K562 (cell line): ENCODE measurements at regions of chr4 and their contacts with region 1.

Region 1: GRCh38 chr4:26410385-26411293 is 79.6 kb downstream of the CCKAR start:
- DNase-seq: peak; percentile 14 to 67 (median 18)
- ATAC-seq: peak; percentile 84
- H3K4me3 ChIP-seq: no peak overlapping the region
- H3K27ac ChIP-seq: no peak overlapping the region
- H3K4me1 ChIP-seq: no peaks in the 10 kb centered on the region
- H3K27me3 ChIP-seq: no peaks in the 10 kb centered on the region
- CTCF ChIP-seq: peak; percentile 46 to 77 (median 55); a peak in 4 of 6 replicates
- EP300 ChIP-seq: no peak
- POLR2A ChIP-seq: no peak
- RAD21 ChIP-seq: peak; percentile 78 to 88

Region 2: GRCh38 chr4:26061248-26061986 is 349.2 kb before region 1 on chr4:
- CTCF ChIA-PET with region 1: interaction called, 8 read pairs
- POLR2A ChIA-PET with region 1: no interaction called
- in situ Hi-C with region 1: loop called (anchors 25 kb)
- intact Hi-C with region 1: loop called (anchors 5 kb)
- DNase-seq: peak; percentile 47 to 57 (median 53)
- ATAC-seq: peak; percentile 97
- H3K4me3 ChIP-seq: no peak overlapping the region
- H3K27ac ChIP-seq: no peak overlapping the region
- H3K4me1 ChIP-seq: peaks cover 0 to 7% of the 10 kb centered on the region in 2 experiments; a peak in 1 of 5 replicates
- H3K27me3 ChIP-seq: peaks cover 0 to 12% of the 10 kb centered on the region in 2 experiments; a peak in 2 of 5 replicates
- CTCF ChIP-seq: peak; percentile 60 to 73 (median 68)
- EP300 ChIP-seq: no peak
- POLR2A ChIP-seq: no peak
- RAD21 ChIP-seq: peak; percentile 40 to 71

Region 3: GRCh38 chr4:26081795-26082498 is 328.7 kb before region 1 on chr4:
- CTCF ChIA-PET with region 1: interaction called, 6 read pairs
- POLR2A ChIA-PET with region 1: no interaction called
- in situ Hi-C with region 1: no loop called
- intact Hi-C with region 1: loop called (anchors 5 kb)
- DNase-seq: peak; percentile 50 to 59 (median 56)
- ATAC-seq: peak; percentile 92
- H3K4me3 ChIP-seq: no peak overlapping the region
- H3K27ac ChIP-seq: no peak overlapping the region
- H3K4me1 ChIP-seq: no peaks in the 10 kb centered on the region
- H3K27me3 ChIP-seq: peaks cover 5 to 16% of the 10 kb centered on the region in 2 experiments; a peak in 4 of 5 replicates
- CTCF ChIP-seq: peak; percentile 46 to 78 (median 63)
- EP300 ChIP-seq: no peak
- POLR2A ChIP-seq: no peak
- RAD21 ChIP-seq: peak; percentile 59 to 80

Region 4: DNA sequence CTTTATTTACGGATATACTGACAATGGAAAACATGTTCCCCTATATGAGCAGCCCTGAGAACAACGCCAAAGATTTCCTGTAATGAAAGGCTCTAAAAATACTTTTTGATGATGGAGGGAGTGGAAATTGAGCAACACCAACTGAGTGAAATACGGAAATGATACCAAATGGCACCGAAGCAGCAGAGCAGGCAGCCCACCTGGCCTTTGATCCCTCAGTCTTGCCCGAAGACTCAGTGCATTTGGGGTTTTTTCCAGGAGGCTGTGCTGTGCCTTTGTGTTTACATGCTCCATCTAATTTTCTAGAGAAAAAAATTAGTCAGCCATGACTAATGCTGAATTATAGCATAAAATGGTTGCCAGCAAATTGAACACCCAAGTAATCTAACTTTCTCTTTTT is 259.7 kb before region 1 on chr4:
- CTCF ChIA-PET with region 1: no interaction called
- POLR2A ChIA-PET with region 1: no interaction called
- in situ Hi-C with region 1: no loop called
- intact Hi-C with region 1: loop called (anchors 10 kb)
- DNase-seq: no peak
- ATAC-seq: no peak
- H3K4me3 ChIP-seq: no peak overlapping the region
- H3K27ac ChIP-seq: no peak overlapping the region
- H3K4me1 ChIP-seq: no peaks in the 10 kb centered on the region
- H3K27me3 ChIP-seq: peaks cover 2 to 13% of the 10 kb centered on the region in 2 experiments; a peak in 3 of 5 replicates
- CTCF ChIP-seq: no peak
- EP300 ChIP-seq: no peak
- POLR2A ChIP-seq: no peak
- RAD21 ChIP-seq: no peak

Region 5: GRCh38 chr4:26330186-26330787 is 80.4 kb before region 1 on chr4:
- CTCF ChIA-PET with region 1: interaction called, 14 read pairs
- POLR2A ChIA-PET with region 1: no interaction called
- in situ Hi-C with region 1: no loop called
- intact Hi-C with region 1: loop called (anchors 1 kb)
- DNase-seq: peak; percentile 29 to 67 (median 36)
- ATAC-seq: peak; percentile 89
- H3K4me3 ChIP-seq: no peak overlapping the region
- H3K27ac ChIP-seq: no peak overlapping the region
- H3K4me1 ChIP-seq: peaks cover 5 to 7% of the 10 kb centered on the region in 2 experiments; a peak in 3 of 5 replicates
- H3K27me3 ChIP-seq: no peaks in the 10 kb centered on the region
- CTCF ChIP-seq: peak; percentile 59 to 70 (median 64)
- EP300 ChIP-seq: no peak
- POLR2A ChIP-seq: no peak
- RAD21 ChIP-seq: peak; percentile 64 to 75

Region 6: DNA sequence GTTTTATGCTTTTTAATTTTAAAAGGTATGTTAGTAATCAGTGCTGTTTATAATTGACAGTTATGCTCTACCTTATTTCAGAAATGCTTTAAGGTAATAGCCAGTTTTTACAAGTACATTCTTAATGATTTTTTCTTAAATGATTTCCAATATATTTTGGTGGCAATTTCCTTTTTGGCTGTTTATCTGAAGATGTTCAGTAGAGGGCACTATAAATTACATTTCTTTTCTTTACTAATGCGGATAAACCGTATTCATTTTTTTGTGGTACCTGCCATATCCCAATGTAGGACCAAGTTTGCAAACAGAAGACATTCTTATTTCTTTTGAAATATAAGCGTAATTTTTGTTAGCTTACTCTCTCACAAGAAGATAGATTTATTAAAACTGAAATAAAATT is 14.2 kb after region 1 on chr4:
- CTCF ChIA-PET with region 1: no interaction called
- POLR2A ChIA-PET with region 1: no interaction called
- in situ Hi-C with region 1: no loop called
- intact Hi-C with region 1: no loop called
- DNase-seq: no peak
- ATAC-seq: no peak
- H3K4me3 ChIP-seq: no peak overlapping the region
- H3K27ac ChIP-seq: no peak overlapping the region
- H3K4me1 ChIP-seq: no peaks in the 10 kb centered on the region
- H3K27me3 ChIP-seq: no peaks in the 10 kb centered on the region
- CTCF ChIP-seq: 0 out of 6 replicates have a peak, but pooled peaks of 1 of the 3 experiments have one; percentile 6
- EP300 ChIP-seq: no peak
- POLR2A ChIP-seq: no peak
- RAD21 ChIP-seq: no peak